Activated CD4-positive, alpha-beta T cell treated with anti-CD3 and anti-CD28 coated beads for 36 hours (primary cell): ENCODE measurements at regions of chr5 and their contacts with region 1.

Region 1: DNA sequence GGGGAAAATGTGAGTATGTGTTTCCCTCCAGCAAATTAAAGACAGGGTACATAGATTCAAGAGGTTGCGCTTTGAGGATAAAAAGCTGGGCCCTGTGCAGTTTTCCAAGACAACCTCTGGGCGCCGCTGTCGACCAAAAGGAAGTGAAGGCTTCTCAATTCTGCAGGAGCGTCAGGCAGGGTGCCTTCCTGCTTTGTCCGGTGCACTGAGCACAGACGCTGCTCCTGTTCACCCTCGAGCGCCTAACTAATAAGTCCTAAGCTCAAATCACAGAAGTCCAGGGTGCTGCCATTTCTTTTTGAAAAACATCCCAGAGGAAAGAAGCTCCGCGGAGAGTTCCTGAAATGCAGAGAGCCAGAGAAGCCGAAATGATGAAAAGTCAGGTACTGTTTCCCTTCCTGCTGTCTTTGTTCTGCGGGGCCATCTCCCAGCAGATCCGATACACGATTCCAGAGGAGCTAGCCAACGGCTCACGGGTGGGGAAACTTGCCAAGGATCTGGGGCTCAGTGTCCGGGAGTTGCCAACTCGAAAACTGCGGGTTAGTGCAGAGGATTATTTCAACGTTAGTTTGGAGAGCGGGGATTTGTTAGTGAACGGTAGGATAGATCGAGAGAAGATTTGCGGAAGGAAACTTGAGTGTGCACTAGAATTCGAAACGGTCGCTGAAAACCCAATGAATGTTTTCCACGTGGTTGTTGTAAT is at the start of gene PCDHGB1:
- DNase-seq: peak; percentile 68
- ATAC-seq: peak; percentile 71
- H3K4me3 Mint-ChIP-seq: peak within 1 kb of the TSS; percentile 31
- H3K27ac Mint-ChIP-seq: no peak within 1 kb of the TSS
- H3K4me1 Mint-ChIP-seq: no peaks in the 10 kb centered on the region
- H3K27me3 Mint-ChIP-seq: peaks cover 63% of the 10 kb centered on the region
- total RNA-seq, gene PCDHGB1: not detected

Region 2: GRCh38 chr5:141100240-141100805 is 249.7 kb before region 1 on chr5 and contains the start of gene PCDHB3:
- CTCF ChIA-PET with region 1: no interaction called
- POLR2A ChIA-PET with region 1: no interaction called
- intact Hi-C with region 1: loop called in 1 of 2 experiments (anchors 10 kb)
- DNase-seq: peak; percentile 80
- ATAC-seq: peak; percentile 70
- H3K4me3 Mint-ChIP-seq: no peak within 1 kb of the TSS
- H3K27ac Mint-ChIP-seq: no peak within 1 kb of the TSS
- H3K4me1 Mint-ChIP-seq: no peaks in the 10 kb centered on the region
- H3K27me3 Mint-ChIP-seq: peaks cover 38% of the 10 kb centered on the region
- total RNA-seq, gene PCDHB3: not detected